Activated naive CD8-positive, alpha-beta T cell treated with anti-CD3 and anti-CD28 coated beads, Interleukin-2, amount 10 ng/mL, durations not matched to agents 7 days and 5 days (primary cell): ENCODE measurements at regions of chr16 and their contacts with region 1.

Region 1: GRCh38 chr16:11297492-11298142 is 16.5 kb upstream of the PRM1 start:
- DNase-seq: peak; percentile 81
- ATAC-seq: peak; percentile 82
- H3K4me3 Mint-ChIP-seq: peak overlapping the region; percentile 77
- H3K27ac Mint-ChIP-seq: peak overlapping the region; percentile 91
- H3K4me1 Mint-ChIP-seq: peaks cover 55% of the 10 kb centered on the region
- H3K27me3 Mint-ChIP-seq: peaks cover 4% of the 10 kb centered on the region

Region 2: DNA sequence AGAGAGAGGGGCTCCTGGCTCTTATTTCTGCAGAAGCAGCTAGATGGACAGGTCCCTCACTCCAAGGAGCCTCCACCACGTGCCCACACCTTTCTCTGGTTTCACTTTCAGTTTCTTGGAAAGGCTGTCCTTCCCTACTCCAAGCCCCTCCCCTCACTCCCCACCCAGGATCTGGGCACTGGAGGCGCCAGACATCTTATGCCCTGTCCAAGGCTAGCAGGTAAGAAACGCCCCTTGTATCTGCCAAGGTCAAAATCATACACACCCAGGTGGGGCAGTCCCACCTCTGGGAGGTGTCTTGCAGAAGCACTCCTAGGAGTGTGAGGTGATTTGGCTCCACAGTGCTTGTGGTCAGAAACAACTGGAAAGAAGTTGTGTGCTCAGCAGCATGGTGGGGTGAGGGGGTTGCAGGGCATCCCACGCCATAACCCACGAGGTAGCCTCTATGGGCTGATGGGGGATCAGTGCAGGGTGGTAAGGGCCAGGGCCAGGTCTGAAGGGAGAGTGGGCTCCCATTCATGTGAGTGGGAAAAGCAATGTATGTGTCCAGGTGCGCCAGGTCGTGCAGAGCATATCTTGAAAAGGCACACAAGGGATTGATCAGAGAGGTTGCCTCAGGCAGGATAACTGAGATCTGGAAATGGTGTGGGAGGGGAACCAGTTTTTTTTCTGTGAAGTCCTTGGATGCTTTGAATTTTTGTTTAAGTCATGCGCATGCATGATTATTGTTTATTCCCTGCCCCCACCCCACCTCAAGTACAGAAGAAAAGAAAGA is 15.3 kb after region 1 on chr16:
- POLR2A ChIA-PET with region 1: interaction called, 54 read pairs
- DNase-seq: no peak
- ATAC-seq: peak; percentile 30
- H3K4me3 Mint-ChIP-seq: peak overlapping the region; percentile 58
- H3K27ac Mint-ChIP-seq: peak overlapping the region; percentile 75
- H3K4me1 Mint-ChIP-seq: peaks cover 68% of the 10 kb centered on the region
- H3K27me3 Mint-ChIP-seq: no peaks in the 10 kb centered on the region

Region 3: GRCh38 chr16:11452746-11453389 is 155.3 kb after region 1 on chr16:
- POLR2A ChIA-PET with region 1: no interaction called
- DNase-seq: no peak
- ATAC-seq: no peak
- H3K4me3 Mint-ChIP-seq: no peak overlapping the region
- H3K27ac Mint-ChIP-seq: no peak overlapping the region
- H3K4me1 Mint-ChIP-seq: no peaks in the 10 kb centered on the region
- H3K27me3 Mint-ChIP-seq: peaks cover 7% of the 10 kb centered on the region